Activated T-helper 2 cell treated with anti-CD3 and anti-CD28 coated beads, Interferon-gamma antibody, Interleukin-2, Interleukin-4, amounts not matched to agents 10 μg/mL and 5 μg/mL and 100 μg/mL, durations not matched to agents 14 hours and 24 hours and 36 hours (primary cell): ENCODE measurements at regions of chr5 and their contacts with region 1.

Region 1: DNA sequence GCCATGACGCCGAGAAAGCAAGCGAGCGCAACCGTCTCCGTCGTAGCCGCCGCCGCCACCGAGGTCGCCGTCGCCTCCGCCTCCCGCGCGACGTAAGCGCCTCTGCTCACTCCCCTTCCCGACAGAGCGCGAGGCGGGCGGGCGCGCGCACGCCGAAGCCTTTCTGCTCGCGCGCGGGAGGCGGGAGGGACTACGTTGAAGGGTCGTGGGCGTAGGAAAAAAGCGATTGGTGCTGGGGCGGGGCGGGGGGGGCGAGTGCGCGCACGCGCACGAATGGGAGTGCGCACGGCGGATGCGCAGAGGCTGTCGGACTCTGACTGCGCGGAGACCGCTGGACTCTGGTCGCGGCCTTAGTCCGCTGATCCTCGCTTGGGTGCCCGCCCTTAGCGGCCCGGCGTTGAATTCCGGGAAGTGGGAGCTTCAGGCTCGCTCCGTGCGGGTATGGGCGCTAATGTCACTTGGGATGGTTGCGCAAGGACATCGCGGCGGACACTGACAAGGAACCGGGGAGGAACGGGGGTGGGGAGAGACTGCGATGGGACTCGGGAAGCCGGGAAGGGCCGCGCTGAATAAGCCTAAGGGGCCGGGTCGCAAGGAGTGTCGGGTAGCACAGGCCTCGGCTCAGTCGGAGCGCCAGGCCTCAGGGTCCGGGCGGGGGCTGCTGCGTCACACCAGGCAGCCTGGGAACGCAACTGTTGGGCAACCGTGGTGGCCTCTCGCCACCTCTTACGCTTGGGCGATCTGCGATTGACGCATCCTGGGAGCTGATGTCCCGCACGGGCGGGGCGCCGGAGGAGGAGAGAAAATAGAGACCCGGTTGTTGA is at the start of gene CHD1:
- DNase-seq: peak; percentile 92
- H3K4me3 Mint-ChIP-seq: peak within 1 kb of the TSS; percentile 98
- H3K27ac Mint-ChIP-seq: peak within 1 kb of the TSS; percentile 99
- H3K4me1 Mint-ChIP-seq: peaks cover 41% of the 10 kb centered on the region
- H3K27me3 Mint-ChIP-seq: no peaks in the 10 kb centered on the region
- total RNA-seq, gene CHD1: 67.6 and 72.1 TPM in 2 replicates

Region 2: DNA sequence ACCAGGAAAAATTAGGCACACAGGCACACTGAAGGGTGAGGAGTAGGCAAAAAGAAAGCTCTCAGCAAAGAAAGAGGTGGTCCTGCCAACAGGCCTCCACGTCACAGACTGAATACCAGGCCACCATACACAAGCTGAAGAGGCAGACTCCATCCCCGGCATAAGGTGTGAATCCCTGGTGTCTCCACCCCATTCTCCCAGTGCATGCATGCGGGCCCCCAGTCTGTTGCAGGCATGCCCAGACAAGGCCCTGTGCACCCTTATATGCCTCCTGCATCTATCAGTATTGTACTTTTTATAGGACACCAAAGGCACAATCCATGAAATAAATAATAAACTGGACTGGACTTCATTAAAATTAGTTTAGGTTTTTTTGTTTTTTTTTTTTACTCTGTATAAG is 82.6 kb before region 1 on chr5:
- intact Hi-C with region 1: no loop called
- DNase-seq: no peak
- H3K4me3 Mint-ChIP-seq: no peak overlapping the region
- H3K27ac Mint-ChIP-seq: no peak overlapping the region
- H3K4me1 Mint-ChIP-seq: no peaks in the 10 kb centered on the region
- H3K27me3 Mint-ChIP-seq: no peaks in the 10 kb centered on the region

Region 3: DNA sequence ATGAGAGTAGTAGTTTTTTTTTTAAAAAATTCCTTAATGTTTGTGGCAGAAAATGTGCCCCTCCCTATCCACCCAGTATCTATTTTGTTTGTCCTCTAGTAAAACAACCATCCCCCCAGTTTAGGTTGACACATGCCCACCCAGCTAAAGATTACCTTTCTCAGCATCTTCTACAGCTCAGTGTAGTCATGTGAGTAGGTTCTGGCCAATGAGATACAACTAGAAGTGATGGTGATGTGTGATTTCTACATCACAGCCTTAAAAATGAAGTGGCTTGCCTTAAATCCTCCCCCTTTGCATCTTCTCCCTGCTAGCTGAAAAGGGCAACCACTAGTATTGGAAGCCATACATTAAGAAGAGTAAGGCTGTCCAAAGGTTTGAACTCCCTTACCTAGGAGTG is 15.2 kb before region 1 on chr5:
- intact Hi-C with region 1: no loop called
- DNase-seq: no peak
- H3K4me3 Mint-ChIP-seq: no peak overlapping the region
- H3K27ac Mint-ChIP-seq: no peak overlapping the region
- H3K4me1 Mint-ChIP-seq: peaks cover 53% of the 10 kb centered on the region
- H3K27me3 Mint-ChIP-seq: no peaks in the 10 kb centered on the region

Region 4: GRCh38 chr5:99032234-99033013 is 103.3 kb after region 1 on chr5:
- intact Hi-C with region 1: loop called (anchors 1 kb)
- DNase-seq: no peak
- H3K4me3 Mint-ChIP-seq: peak overlapping the region; percentile 77
- H3K27ac Mint-ChIP-seq: peak overlapping the region; percentile 82
- H3K4me1 Mint-ChIP-seq: peaks cover 69% of the 10 kb centered on the region
- H3K27me3 Mint-ChIP-seq: no peaks in the 10 kb centered on the region